WTC11 (cell line): ENCODE measurements at regions of chr6 and their contacts with region 1.

Region 1: DNA sequence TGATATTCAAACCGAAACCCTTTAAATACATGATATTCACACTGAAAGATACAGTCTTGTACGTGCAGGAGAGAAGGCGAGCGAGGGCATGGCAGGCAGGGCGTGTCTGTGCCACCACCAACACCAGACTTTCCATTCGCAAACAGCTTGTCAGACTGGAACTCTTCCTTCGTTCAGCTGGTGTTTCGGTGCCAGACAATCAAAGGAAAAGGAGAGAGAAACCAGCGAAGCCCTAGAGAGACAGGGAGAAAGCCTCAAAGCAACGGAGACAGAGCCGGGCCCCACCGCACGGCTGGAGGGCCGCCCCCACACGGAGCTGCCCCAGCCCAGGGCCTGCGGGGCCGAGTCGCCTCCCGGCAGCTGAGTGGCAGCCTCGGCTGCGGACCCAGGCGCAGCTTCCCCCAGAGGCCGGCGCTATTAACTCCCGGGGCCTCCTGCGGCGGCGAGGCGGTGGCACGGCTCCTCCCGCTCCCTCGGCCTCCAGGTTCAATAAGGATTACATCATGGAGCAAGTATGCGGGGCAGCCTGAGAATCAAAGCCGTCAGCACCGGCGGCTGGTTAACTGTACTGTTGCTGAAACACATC is 32.1 kb upstream of the NR2E1 start:
- DNase-seq: peak; percentile 88
- ATAC-seq: peak; percentile 94
- H3K4me3 Mint-ChIP-seq: peak overlapping the region; percentile 66
- H3K27ac Mint-ChIP-seq: no peak overlapping the region
- H3K4me1 Mint-ChIP-seq: peaks cover 21% of the 10 kb centered on the region
- H3K27me3 Mint-ChIP-seq: peaks cover 95% of the 10 kb centered on the region
- CTCF ChIP-seq: no peak

Region 2: GRCh38 chr6:107982486-107982885 is 151.2 kb before region 1 on chr6:
- CTCF ChIA-PET with region 1: interaction called, 10 read pairs
- POLR2A ChIA-PET with region 1: no interaction called
- DNase-seq: no peak
- ATAC-seq: no peak
- H3K4me3 Mint-ChIP-seq: no peak overlapping the region
- H3K27ac Mint-ChIP-seq: no peak overlapping the region
- H3K4me1 Mint-ChIP-seq: peaks cover 20% of the 10 kb centered on the region
- H3K27me3 Mint-ChIP-seq: peaks cover 61% of the 10 kb centered on the region
- CTCF ChIP-seq: no peak